AG04450 (cell line): ENCODE measurements at regions of chr18 and their contacts with region 1.

Region 1: DNA sequence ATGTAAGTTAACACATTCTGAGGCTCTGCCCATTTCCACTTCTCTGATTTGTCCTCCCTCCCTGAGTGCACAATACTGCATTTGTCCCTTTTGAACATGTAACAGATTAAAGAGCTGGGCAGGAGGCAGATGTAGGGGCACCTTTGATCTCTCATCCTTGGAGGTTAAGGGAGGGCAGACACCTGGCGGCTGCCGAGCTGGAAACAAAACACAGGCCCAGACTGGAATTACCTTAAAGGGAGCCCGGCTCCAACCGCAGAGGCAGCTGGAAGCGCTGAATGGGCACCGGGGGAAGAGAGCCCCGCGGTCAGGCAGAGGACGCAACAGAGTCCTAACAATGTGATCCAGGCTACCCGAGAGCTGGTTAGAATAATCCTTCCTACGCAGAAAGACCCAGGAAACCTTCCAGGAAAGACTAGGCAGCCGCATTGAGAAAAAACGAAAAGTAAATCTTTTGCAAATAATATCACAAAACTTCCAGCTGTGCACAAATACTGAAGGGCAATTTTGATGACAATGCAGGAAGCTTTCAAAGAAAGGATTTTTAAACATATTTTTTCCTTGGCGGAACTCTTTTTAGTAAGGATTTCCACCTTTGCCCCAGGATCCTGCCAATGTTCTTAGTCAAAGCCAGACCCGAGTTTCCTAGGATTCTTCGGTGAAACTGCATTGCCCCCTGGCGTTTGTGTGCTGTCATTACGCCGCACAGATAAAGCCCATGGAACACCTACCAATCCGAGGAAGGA is 216.0 kb downstream of the TGIF1 start:
- DNase-seq: peak; percentile 82
- H3K4me3 ChIP-seq: no peak overlapping the region
- H3K27ac ChIP-seq: peak overlapping the region; percentile 80
- H3K27me3 ChIP-seq: no peaks in the 10 kb centered on the region
- CTCF ChIP-seq: peak; percentile 97

Region 2: GRCh38 chr18:3447895-3448837 is 217.8 kb before region 1 on chr18:
- CTCF ChIA-PET with region 1: interaction called, 69 read pairs
- POLR2A ChIA-PET with region 1: interaction called, 14 read pairs
- DNase-seq: peak; percentile 88
- H3K4me3 ChIP-seq: peak overlapping the region; percentile 89
- H3K27ac ChIP-seq: peak overlapping the region; percentile 99
- H3K27me3 ChIP-seq: no peaks in the 10 kb centered on the region
- CTCF ChIP-seq: peak; percentile 18; the same call in 1 of the 2 replicates

Region 3: DNA sequence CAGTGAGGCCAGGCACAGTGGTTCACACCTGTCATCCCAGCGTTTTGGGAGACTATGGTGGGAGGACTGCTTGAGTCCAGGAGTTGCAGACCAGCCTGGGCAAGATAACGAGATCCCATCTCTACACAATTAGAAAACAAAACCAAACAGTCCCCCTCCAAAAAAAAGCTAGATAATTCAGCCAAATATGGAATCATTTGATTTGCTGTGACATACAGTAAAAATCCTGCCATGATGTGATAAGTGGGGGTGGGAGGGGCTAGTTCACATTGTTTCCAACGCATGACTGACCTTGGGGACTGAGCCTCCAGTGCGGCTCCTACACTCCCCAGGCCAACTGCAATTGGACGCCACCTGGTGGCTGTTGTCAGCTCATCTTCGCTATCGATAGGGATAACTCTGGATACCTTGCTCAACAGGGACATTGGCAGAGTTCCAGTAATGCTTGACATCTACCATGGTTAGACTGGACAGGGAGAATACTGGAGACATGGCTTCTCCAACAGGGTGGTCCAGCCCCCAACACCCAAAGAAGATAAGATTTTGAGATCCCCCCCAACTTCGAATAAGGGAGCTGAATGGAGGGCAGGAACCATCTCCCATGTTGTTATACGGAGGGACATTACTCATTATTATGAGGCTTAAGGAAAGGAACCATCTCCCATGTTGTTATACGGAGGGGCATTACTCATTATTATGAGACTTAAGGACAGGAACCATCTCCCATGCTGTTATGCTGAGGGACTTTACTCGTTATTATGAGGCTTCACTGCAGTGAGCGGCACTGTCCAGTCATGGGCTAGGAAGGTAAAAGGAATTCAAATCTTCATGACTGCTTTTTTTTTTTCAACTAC is 80.1 kb before region 1 on chr18:
- CTCF ChIA-PET with region 1: interaction called, 17 read pairs
- POLR2A ChIA-PET with region 1: no interaction called
- DNase-seq: no peak
- H3K4me3 ChIP-seq: no peak overlapping the region
- H3K27ac ChIP-seq: no peak overlapping the region
- H3K27me3 ChIP-seq: no peaks in the 10 kb centered on the region
- CTCF ChIP-seq: peak; percentile 74

Region 4: GRCh38 chr18:3623769-3624545 is 42.0 kb before region 1 on chr18:
- CTCF ChIA-PET with region 1: interaction called, 10 read pairs
- POLR2A ChIA-PET with region 1: interaction called, 9 read pairs
- DNase-seq: peak; percentile 91
- H3K4me3 ChIP-seq: peak overlapping the region; percentile 51
- H3K27ac ChIP-seq: peak overlapping the region; percentile 100
- H3K27me3 ChIP-seq: no peaks in the 10 kb centered on the region
- CTCF ChIP-seq: no peak

Region 5: DNA sequence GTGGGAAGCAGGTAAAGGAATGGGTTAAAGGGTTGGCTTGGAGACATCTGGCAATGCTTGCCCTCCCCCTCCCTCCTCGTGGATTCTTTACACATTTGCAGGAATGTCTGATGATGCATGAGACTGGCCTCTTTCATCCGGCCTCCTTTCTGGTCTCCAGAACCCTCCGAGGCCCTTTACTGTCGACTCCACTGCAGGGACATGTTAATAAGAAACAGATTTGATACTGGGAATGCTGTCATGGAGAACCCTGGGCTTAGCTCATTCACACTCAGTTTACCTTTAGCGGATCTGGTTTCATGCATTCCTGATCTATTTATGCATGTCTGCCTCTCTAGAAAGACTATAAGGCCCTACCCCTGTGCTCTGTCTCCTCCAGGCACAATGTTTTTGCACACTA is 22.7 kb after region 1 on chr18:
- CTCF ChIA-PET with region 1: interaction called, 15 read pairs
- POLR2A ChIA-PET with region 1: no interaction called
- DNase-seq: peak; percentile 96
- H3K4me3 ChIP-seq: no peak overlapping the region
- H3K27ac ChIP-seq: peak overlapping the region; percentile 47
- H3K27me3 ChIP-seq: no peaks in the 10 kb centered on the region
- CTCF ChIP-seq: no peak